Activated T-helper 2 cell treated with anti-CD3 and anti-CD28 coated beads, Interferon-gamma antibody, Interleukin-2, Interleukin-4, amounts not matched to agents 10 μg/mL and 5 μg/mL and 100 μg/mL, durations not matched to agents 14 hours and 24 hours and 36 hours (primary cell): ENCODE measurements at regions of chr1 and their contacts with region 1.

Region 1: GRCh38 chr1:109910123-109910962 is at the start of gene CSF1:
- DNase-seq: peak; percentile 65
- H3K4me3 Mint-ChIP-seq: peak within 1 kb of the TSS; percentile 92
- H3K27ac Mint-ChIP-seq: peak within 1 kb of the TSS; percentile 96
- H3K4me1 Mint-ChIP-seq: peaks cover 75% of the 10 kb centered on the region
- H3K27me3 Mint-ChIP-seq: no peaks in the 10 kb centered on the region
- total RNA-seq, gene CSF1: 251 and 252 TPM in 2 replicates

Region 2: GRCh38 chr1:109773146-109773899 is 137.0 kb before region 1 on chr1:
- intact Hi-C with region 1: loop called (anchors 2 kb)
- DNase-seq: peak; percentile 65
- H3K4me3 Mint-ChIP-seq: no peak overlapping the region
- H3K27ac Mint-ChIP-seq: no peak overlapping the region
- H3K4me1 Mint-ChIP-seq: peaks cover 23% of the 10 kb centered on the region
- H3K27me3 Mint-ChIP-seq: peaks cover 5% of the 10 kb centered on the region

Region 3: GRCh38 chr1:109802901-109803561 is 107.3 kb before region 1 on chr1:
- intact Hi-C with region 1: loop called (anchors 1 kb)
- DNase-seq: no peak
- H3K4me3 Mint-ChIP-seq: peak overlapping the region; percentile 77
- H3K27ac Mint-ChIP-seq: peak overlapping the region; percentile 98
- H3K4me1 Mint-ChIP-seq: peaks cover 76% of the 10 kb centered on the region
- H3K27me3 Mint-ChIP-seq: no peaks in the 10 kb centered on the region

Region 4: GRCh38 chr1:109890115-109890953 is 20.0 kb before region 1 on chr1:
- intact Hi-C with region 1: loop called (anchors 1 kb)
- DNase-seq: no peak
- H3K4me3 Mint-ChIP-seq: peak overlapping the region; percentile 18
- H3K27ac Mint-ChIP-seq: peak overlapping the region; percentile 94
- H3K4me1 Mint-ChIP-seq: peaks cover 39% of the 10 kb centered on the region
- H3K27me3 Mint-ChIP-seq: no peaks in the 10 kb centered on the region

Region 5: DNA sequence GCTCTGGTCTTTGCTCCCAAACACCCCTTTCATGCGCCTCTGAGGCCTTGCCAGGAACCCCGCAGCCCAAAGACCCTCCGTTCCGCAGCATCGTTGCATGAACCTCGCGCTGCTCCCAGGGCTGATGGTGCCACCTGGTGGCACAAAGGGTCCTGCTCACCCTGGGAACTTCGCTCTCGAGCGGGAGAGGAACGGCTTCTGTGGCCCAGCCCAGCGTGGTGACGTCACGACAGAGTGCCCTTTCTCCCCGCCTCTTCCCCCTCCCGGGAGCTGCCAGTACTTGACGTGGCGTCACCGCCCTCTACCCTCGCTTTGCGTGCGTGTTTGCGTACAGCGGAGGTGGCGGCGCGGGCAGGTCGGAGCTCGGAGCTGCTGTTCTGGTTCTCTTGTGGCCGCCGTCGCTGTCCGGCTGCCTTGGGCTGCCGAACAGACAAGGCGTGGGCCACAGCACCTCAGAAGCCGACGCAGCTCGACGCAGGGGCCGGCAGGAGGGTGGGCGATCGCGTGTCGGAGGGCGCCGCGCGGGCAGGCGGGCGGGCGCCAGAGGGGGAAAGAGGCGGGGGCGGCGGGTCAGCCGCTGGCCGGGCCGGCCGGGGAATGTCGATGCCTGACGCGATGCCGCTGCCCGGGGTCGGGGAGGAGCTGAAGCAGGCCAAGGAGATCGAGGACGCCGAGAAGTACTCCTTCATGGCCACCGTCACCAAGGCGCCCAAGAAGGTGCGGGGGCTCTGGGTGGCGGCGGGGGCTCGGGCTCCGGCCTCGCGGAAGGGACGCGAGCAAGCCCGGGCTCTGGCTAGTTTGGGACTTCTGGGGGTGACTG is 74.3 kb after region 1 on chr1 and contains the start of gene AHCYL1:
- intact Hi-C with region 1: loop called (anchors 1 kb)
- DNase-seq: peak; percentile 99
- H3K4me3 Mint-ChIP-seq: peak within 1 kb of the TSS; percentile 97
- H3K27ac Mint-ChIP-seq: peak within 1 kb of the TSS; percentile 97
- H3K4me1 Mint-ChIP-seq: peaks cover 42% of the 10 kb centered on the region
- H3K27me3 Mint-ChIP-seq: no peaks in the 10 kb centered on the region
- total RNA-seq, gene AHCYL1: 85.8 and 86.5 TPM in 2 replicates

Region 6: GRCh38 chr1:110118636-110119615 is 208.6 kb after region 1 on chr1:
- intact Hi-C with region 1: no loop called
- DNase-seq: no peak
- H3K4me3 Mint-ChIP-seq: no peak overlapping the region
- H3K27ac Mint-ChIP-seq: no peak overlapping the region
- H3K4me1 Mint-ChIP-seq: no peaks in the 10 kb centered on the region
- H3K27me3 Mint-ChIP-seq: peaks cover 15% of the 10 kb centered on the region